ENCODE measurements at regions of chr2 and their contacts with region 1.

Region 1: DNA sequence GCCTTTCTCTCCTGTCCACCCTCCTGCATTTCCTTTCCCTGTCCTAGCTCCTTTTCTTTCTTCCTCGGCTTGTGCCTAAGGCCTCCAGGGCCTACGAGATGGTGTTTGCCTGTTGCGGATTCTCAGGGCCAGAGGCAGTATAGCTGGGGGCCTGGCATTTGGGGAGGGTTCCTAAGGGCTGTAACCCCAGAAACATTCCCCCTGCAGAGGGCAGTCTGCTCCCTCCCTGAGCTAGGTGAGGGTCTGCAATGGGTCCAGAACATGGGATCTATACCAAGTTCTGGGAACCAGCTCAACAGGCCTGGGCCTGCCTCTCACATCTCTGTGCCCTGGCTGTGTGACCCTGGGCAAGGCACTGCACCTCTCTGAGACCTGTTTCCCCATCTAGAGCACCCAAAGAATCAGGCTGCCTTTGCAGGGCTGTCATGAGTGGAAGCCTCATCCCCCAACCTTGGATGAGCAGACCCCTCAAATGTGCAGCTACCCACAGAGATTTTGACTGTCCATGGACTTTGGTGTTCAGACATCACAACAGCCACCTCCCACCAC is 97.5 kb downstream of the GLI2 start:
- DNase-seq: peak; percentile 39
- ATAC-seq: peak; percentile 67
- H3K4me3 Mint-ChIP-seq: no peak overlapping the region
- H3K27ac Mint-ChIP-seq: peak overlapping the region; percentile 89
- H3K4me1 Mint-ChIP-seq: peaks cover 32% of the 10 kb centered on the region
- H3K27me3 Mint-ChIP-seq: no peaks in the 10 kb centered on the region
- CTCF ChIP-seq: no peak

Region 2: GRCh38 chr2:120820263-120820952 is 12.8 kb before region 1 on chr2:
- CTCF ChIA-PET with region 1: interaction called, 12 read pairs
- POLR2A ChIA-PET with region 1: no interaction called
- DNase-seq: no peak
- ATAC-seq: no peak
- H3K4me3 Mint-ChIP-seq: no peak overlapping the region
- H3K27ac Mint-ChIP-seq: 0 out of 2 replicates have a peak overlapping the region, but pooled peaks have one; percentile 54
- H3K4me1 Mint-ChIP-seq: peaks cover 69% of the 10 kb centered on the region
- H3K27me3 Mint-ChIP-seq: no peaks in the 10 kb centered on the region
- CTCF ChIP-seq: no peak